ENCODE measurements at regions of chr15 and their contacts with region 1.

Region 1: GRCh38 chr15:71526060-71526820 is 284.1 kb upstream of the NR2E3 start:
- DNase-seq: no peak
- ATAC-seq: no peak
- H3K4me3 ChIP-seq: peak overlapping the region in 1 of 2 donors; percentile 8
- H3K27ac ChIP-seq: no peak overlapping the region
- H3K4me1 ChIP-seq: peaks cover 2 to 3% of the 10 kb centered on the region in 2 donors
- H3K27me3 ChIP-seq: no peaks in the 10 kb centered on the region

Region 2: GRCh38 chr15:71455107-71455506 is 71.1 kb before region 1 on chr15:
- intact Hi-C with region 1: loop called in 1 of 2 experiments (anchors 10 kb)
- DNase-seq: no peak
- ATAC-seq: no peak
- H3K4me3 ChIP-seq: no peak overlapping the region
- H3K27ac ChIP-seq: no peak overlapping the region
- H3K4me1 ChIP-seq: no peaks in the 10 kb centered on the region
- H3K27me3 ChIP-seq: no peaks in the 10 kb centered on the region